PC-3 (cell line): ENCODE measurements at regions of chr3 and their contacts with region 1.

Region 1: GRCh38 chr3:157335198-157336076 is 101.2 kb upstream of the PTX3 start:
- DNase-seq: peak; percentile 84
- ATAC-seq: peak; percentile 92
- H3K4me3 ChIP-seq: no peak overlapping the region; the same call in 1 of the 2 replicates
- H3K27ac ChIP-seq: peak overlapping the region; percentile 72
- H3K4me1 ChIP-seq: peaks cover 40% of the 10 kb centered on the region
- H3K27me3 ChIP-seq: no peaks in the 10 kb centered on the region
- CTCF ChIP-seq: no peak

Region 2: DNA sequence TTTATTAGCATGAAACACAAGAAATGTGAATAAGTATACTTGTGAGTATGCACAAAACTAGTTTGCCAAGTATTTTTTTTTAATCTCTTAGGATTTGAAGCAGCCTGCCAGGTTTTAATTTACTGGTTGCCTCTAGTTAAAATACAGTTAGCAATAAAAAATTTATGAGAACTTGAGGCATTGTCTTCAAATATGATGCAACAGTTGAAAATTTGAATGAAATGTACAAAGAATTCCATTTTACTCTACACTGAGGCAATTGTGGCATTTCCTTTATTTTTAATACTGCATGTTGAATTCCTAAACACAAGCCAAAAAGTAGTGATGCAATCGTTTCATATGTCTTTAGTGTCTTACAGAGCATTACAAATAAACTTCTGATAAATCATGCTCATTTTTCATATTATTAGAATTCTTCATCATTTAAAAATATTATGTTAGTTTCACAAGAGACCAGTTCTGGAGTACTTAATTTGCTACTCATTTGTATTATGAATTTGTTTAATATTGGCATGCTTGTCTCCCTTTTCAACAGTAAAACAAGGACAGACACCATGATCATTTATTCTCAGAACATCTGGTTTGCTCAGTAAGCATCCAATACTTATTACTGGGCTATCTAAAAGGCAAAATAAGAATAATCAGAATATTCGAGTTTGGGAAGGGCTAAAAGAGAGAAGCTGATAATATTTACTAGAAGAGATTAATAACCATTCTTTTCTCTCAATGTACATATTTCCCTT is 23.6 kb before region 1 on chr3:
- CTCF ChIA-PET with region 1: no interaction called
- POLR2A ChIA-PET with region 1: no interaction called
- intact Hi-C with region 1: loop called (anchors 2 kb)
- DNase-seq: peak; percentile 93
- ATAC-seq: peak; percentile 90
- H3K4me3 ChIP-seq: no peak overlapping the region
- H3K27ac ChIP-seq: peak overlapping the region; percentile 49
- H3K4me1 ChIP-seq: peaks cover 25% of the 10 kb centered on the region
- H3K27me3 ChIP-seq: no peaks in the 10 kb centered on the region
- CTCF ChIP-seq: no peak

Region 3: GRCh38 chr3:157360044-157360443 is 24.6 kb after region 1 on chr3:
- CTCF ChIA-PET with region 1: no interaction called
- POLR2A ChIA-PET with region 1: interaction called, 5 read pairs
- intact Hi-C with region 1: loop called (anchors 1 kb)
- DNase-seq: peak; percentile 94
- ATAC-seq: peak; percentile 99
- H3K4me3 ChIP-seq: peak overlapping the region; percentile 13; the same call in 1 of the 2 replicates
- H3K27ac ChIP-seq: peak overlapping the region; percentile 54
- H3K4me1 ChIP-seq: peaks cover 29% of the 10 kb centered on the region
- H3K27me3 ChIP-seq: no peaks in the 10 kb centered on the region
- CTCF ChIP-seq: no peak

Region 4: GRCh38 chr3:157384491-157384890 is 49.1 kb after region 1 on chr3:
- CTCF ChIA-PET with region 1: no interaction called
- POLR2A ChIA-PET with region 1: no interaction called
- intact Hi-C with region 1: no loop called
- DNase-seq: no peak
- ATAC-seq: no peak
- H3K4me3 ChIP-seq: no peak overlapping the region
- H3K27ac ChIP-seq: no peak overlapping the region
- H3K4me1 ChIP-seq: peaks cover 15% of the 10 kb centered on the region
- H3K27me3 ChIP-seq: no peaks in the 10 kb centered on the region
- CTCF ChIP-seq: no peak

Region 5: DNA sequence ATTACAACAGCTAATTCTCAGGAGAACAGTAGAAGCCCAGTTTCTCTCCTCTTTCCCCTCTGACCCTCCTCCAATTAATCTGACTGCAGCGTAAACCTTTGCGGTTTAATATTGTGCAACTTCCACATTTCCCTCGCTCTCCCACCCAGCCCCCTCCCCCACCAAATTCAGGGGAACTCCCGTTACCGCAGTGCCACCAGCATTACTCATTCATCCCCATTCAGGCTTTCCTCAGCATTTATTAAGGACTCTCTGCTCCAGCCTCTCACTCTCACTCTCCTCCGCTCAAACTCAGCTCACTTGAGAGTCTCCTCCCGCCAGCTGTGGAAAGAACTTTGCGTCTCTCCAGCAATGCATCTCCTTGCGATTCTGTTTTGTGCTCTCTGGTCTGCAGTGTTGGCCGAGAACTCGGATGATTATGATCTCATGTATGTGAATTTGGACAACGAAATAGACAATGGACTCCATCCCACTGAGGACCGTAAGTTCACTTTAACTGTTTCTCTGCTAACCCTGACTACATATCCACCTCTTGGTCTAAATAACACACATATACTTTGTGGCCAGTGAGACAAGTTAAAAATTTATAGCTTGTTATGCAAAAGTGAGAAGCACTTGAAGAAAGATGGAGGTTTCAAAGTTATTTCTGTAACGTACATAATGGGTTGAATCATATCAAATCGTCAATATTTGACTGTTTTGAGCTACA is 101.3 kb after region 1 on chr3 and contains the start of gene PTX3:
- CTCF ChIA-PET with region 1: no interaction called
- POLR2A ChIA-PET with region 1: no interaction called
- intact Hi-C with region 1: loop called (anchors 2 kb)
- DNase-seq: peak; percentile 90
- ATAC-seq: peak; percentile 51
- H3K4me3 ChIP-seq: peak within 1 kb of the TSS; percentile 82
- H3K27ac ChIP-seq: peak within 1 kb of the TSS; percentile 68
- H3K4me1 ChIP-seq: peaks cover 16% of the 10 kb centered on the region
- H3K27me3 ChIP-seq: no peaks in the 10 kb centered on the region
- CTCF ChIP-seq: no peak
- total RNA-seq, gene PTX3: 24.4 and 27.3 TPM in 2 replicates